MCF 10A (cell line): ENCODE measurements at regions of chr17 and their contacts with region 1.

Region 1: GRCh38 chr17:40075201-40075941 is 12.6 kb downstream of the THRA start:
- DNase-seq: peak; percentile 78
- H3K4me3 Mint-ChIP-seq: peak overlapping the region; percentile 65
- H3K27ac Mint-ChIP-seq: peak overlapping the region; percentile 36
- H3K4me1 Mint-ChIP-seq: peaks cover 62% of the 10 kb centered on the region
- H3K27me3 Mint-ChIP-seq: no peaks in the 10 kb centered on the region
- CTCF ChIP-seq: peak; percentile 89

Region 2: GRCh38 chr17:40062329-40063186 is 12.8 kb before region 1 on chr17 and contains the start of gene THRA:
- CTCF ChIA-PET with region 1: interaction called, 131 read pairs
- POLR2A ChIA-PET with region 1: interaction called, 16 read pairs
- intact Hi-C with region 1: no loop called
- DNase-seq: peak; percentile 46
- H3K4me3 Mint-ChIP-seq: peak within 1 kb of the TSS; percentile 89
- H3K27ac Mint-ChIP-seq: peak within 1 kb of the TSS; percentile 39
- H3K4me1 Mint-ChIP-seq: peaks cover 33% of the 10 kb centered on the region
- H3K27me3 Mint-ChIP-seq: no peaks in the 10 kb centered on the region
- CTCF ChIP-seq: peak; percentile 22
- total RNA-seq, gene THRA: 5.5 and 6.4 TPM in 2 replicates